ENCODE measurements at regions of chr17 and their contacts with region 1.

Region 1: GRCh38 chr17:35879773-35880654 is at the start of gene CCL5:
- DNase-seq: peak in 1 of 9 donors; percentile 61
- ATAC-seq: peak; percentile 92
- H3K4me3 ChIP-seq: peak within 1 kb of the TSS; percentile 31
- H3K4me3 Mint-ChIP-seq: peak within 1 kb of the TSS in 4 of 10 donors; percentile 10 to 86 (median 64)
- H3K27ac ChIP-seq: no peak within 1 kb of the TSS
- H3K27ac Mint-ChIP-seq: peak within 1 kb of the TSS in 3 of 9 donors; percentile 11 to 91 (median 12)
- H3K4me1 ChIP-seq: peaks cover 6 to 25% of the 10 kb centered on the region in 2 donors
- H3K4me1 Mint-ChIP-seq: peaks cover 6 to 50% (median 15%) of the 10 kb centered on the region in 7 donors
- H3K27me3 ChIP-seq: no peaks in the 10 kb centered on the region
- H3K27me3 Mint-ChIP-seq: peaks cover 0 to 8% (median 0%) of the 10 kb centered on the region in 5 donors
- total RNA-seq, gene CCL5: 17.0 to 192 (median 29.1) TPM

Region 2: GRCh38 chr17:35889818-35890763 is 10.1 kb after region 1 on chr17:
- CTCF ChIA-PET with region 1: no interaction called
- POLR2A ChIA-PET with region 1: no interaction called
- intact Hi-C with region 1: loop called in 1 of 2 experiments (anchors 1 kb)
- DNase-seq: no peak
- ATAC-seq: peak; percentile 22
- H3K4me3 ChIP-seq: no peak overlapping the region
- H3K4me3 Mint-ChIP-seq: peak overlapping the region in 1 of 10 donors; percentile 75
- H3K27ac ChIP-seq: no peak overlapping the region
- H3K27ac Mint-ChIP-seq: peak overlapping the region in 3 of 9 donors; percentile 49 to 89 (median 58)
- H3K4me1 ChIP-seq: peaks cover 0 to 49% of the 10 kb centered on the region in 2 donors
- H3K4me1 Mint-ChIP-seq: peaks cover 0 to 52% (median 7%) of the 10 kb centered on the region in 7 donors
- H3K27me3 ChIP-seq: no peaks in the 10 kb centered on the region
- H3K27me3 Mint-ChIP-seq: no peaks in the 10 kb centered on the region

Measured in naive thymus-derived CD4-positive, alpha-beta T cell (primary cell).